Sigmoid colon (tissue), 7 donors: ENCODE measurements at regions of chr3 and their contacts with region 1.

Region 1: DNA sequence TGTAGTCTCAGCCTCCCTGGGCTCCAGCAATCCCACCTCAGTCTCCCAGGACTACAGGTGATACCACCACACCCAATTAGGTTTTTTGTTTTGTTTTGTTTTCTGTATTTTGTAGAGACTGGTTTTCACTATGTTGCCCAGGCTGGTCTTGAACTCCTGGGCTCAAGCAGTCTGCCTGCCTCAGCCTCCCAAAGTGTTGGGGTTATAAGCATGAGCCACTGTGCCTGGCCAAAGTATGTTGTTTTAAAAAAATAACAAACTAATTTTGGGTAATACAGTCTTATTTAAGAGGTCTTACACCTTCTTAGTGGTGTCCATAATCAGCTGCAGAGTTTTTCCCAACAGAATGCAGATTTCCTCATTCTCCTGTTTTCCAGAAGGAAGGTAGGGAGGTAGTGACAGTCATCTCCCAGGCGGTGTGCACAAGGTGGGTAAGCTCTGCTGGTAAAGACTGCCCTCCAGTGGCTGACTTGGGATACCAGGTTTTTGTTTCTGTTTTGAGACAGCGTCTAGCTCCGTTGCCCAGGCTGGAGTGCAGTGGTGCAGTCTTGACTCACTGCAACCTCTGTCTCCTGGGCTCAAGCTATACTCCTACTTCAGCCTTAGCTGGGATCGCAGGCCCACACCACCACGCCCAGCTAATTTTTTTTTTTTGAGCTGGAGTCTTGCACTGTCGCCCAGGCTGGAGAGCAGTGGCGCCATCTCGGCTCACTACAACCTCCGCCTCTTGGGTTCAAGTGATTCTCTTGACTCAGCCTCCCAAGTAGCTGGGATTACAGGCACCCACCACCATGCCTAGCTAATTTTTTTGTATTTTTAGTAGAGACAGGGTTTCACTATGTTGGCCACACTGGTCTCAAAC is 58.4 kb downstream of the MAP6D1 start:
- DNase-seq: peak; percentile 78
- H3K4me3 ChIP-seq: no peak overlapping the region
- H3K27ac ChIP-seq: no peak overlapping the region
- H3K4me1 ChIP-seq: no peaks in the 10 kb centered on the region
- H3K27me3 ChIP-seq: no peaks in the 10 kb centered on the region
- CTCF ChIP-seq: peak; percentile 61 to 85 (median 76)
- EP300 ChIP-seq: no peak
- POLR2A ChIP-seq: no peak

Region 2: GRCh38 chr3:182925330-182925943 is 841.5 kb before region 1 on chr3:
- intact Hi-C with region 1: no loop called
- DNase-seq: no peak
- H3K4me3 ChIP-seq: no peak overlapping the region
- H3K27ac ChIP-seq: no peak overlapping the region
- H3K4me1 ChIP-seq: peaks cover 0 to 6% (median 3%) of the 10 kb centered on the region in 4 donors
- H3K27me3 ChIP-seq: no peaks in the 10 kb centered on the region
- CTCF ChIP-seq: no peak
- EP300 ChIP-seq: no peak
- POLR2A ChIP-seq: no peak

Region 3: GRCh38 chr3:183468424-183468823 is 298.6 kb before region 1 on chr3:
- intact Hi-C with region 1: loop called (anchors 1 kb)
- DNase-seq: no peak
- H3K4me3 ChIP-seq: no peak overlapping the region
- H3K27ac ChIP-seq: no peak overlapping the region
- H3K4me1 ChIP-seq: peaks cover 0 to 3% (median 3%) of the 10 kb centered on the region in 4 donors
- H3K27me3 ChIP-seq: no peaks in the 10 kb centered on the region
- CTCF ChIP-seq: no peak
- EP300 ChIP-seq: no peak
- POLR2A ChIP-seq: no peak

Region 4: GRCh38 chr3:184017672-184018423 is 250.9 kb after region 1 on chr3 and contains the start of gene ABCC5:
- intact Hi-C with region 1: no loop called
- DNase-seq: peak; percentile 97
- H3K4me3 ChIP-seq: peak within 1 kb of the TSS; percentile 78 to 98 (median 88)
- H3K27ac ChIP-seq: peak within 1 kb of the TSS; percentile 83 to 85 (median 85)
- H3K4me1 ChIP-seq: peaks cover 0 to 27% (median 12%) of the 10 kb centered on the region in 4 donors
- H3K27me3 ChIP-seq: no peaks in the 10 kb centered on the region
- CTCF ChIP-seq: peak in 3 of 4 experiments; percentile 67 to 91 (median 76)
- EP300 ChIP-seq: no peak
- POLR2A ChIP-seq: no peak
- total RNA-seq, gene ABCC5: 16.0 to 39.6 (median 21.0) TPM